GM12878 (cell line): ENCODE measurements at regions of chr11 and their contacts with region 1.

Region 1: DNA sequence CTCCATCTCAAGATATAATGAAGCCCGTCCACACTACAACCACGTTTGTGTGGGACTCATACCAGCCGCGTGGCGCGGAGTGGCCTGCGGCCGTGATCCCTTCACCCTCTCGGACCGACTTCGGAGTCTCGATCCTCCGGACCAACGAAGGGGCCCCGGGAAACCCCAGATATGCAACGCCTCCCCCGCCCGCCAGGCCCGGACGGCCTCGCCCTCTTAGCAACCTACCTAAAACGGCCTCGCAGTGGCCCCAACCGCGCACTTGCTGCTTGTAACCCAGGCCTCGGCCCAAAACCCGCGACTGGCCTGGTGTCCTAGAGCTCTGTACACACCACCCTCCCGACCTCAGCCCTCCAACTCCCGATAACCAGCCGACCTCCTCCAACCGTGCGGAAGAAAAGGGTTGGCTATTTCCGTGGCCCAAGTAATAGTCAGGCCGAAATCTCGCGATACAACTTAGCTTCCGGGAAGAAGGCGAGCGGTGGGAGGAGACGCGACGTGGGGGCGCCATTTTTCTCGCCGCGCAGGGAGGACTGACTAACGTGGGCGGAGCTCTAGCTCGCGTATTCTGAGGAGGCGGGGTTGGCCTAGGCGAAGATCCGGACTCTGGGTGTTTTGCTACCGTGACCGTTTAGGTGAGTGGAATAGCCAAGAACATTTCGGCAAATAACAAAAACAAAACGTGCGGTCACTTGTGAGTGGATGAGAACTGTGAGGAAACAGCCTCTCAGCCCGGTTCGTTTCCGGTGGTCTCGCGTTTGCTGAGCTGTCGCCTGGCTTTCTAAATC is at the starts of genes C11orf54 and TAF1D:
- DNase-seq: peak; percentile 93
- ATAC-seq: peak; percentile 85
- H3K4me3 ChIP-seq: peak within 1 kb of the TSS; percentile 76
- H3K27ac ChIP-seq: peak within 1 kb of the TSS; percentile 91
- H3K4me1 ChIP-seq: no peaks in the 10 kb centered on the region; the same call in none of the 2 replicates
- H3K27me3 ChIP-seq: no peaks in the 10 kb centered on the region
- CTCF ChIP-seq: no peak
- EP300 ChIP-seq: no peak
- POLR2A ChIP-seq: peak; percentile 99
- RAD21 ChIP-seq: no peak
- polyA plus RNA-seq, gene C11orf54: 31.3 to 31.5 TPM
- polyA plus RNA-seq, gene TAF1D: 112 to 181 TPM

Region 2: GRCh38 chr11:93543292-93543977 is 197.9 kb before region 1 on chr11 and contains the start of gene SMCO4:
- CTCF ChIA-PET with region 1: no interaction called
- POLR2A ChIA-PET with region 1: interaction called, 3 read pairs
- RAD21 ChIA-PET with region 1: no interaction called
- SMC1A ChIA-PET with region 1: interaction called, 3 read pairs
- in situ Hi-C with region 1: no loop called
- intact Hi-C with region 1: loop called (anchors 5 kb)
- DNase-seq: no peak
- ATAC-seq: peak; percentile 78
- H3K4me3 ChIP-seq: peak within 1 kb of the TSS; percentile 91
- H3K27ac ChIP-seq: peak within 1 kb of the TSS; percentile 45
- H3K4me1 ChIP-seq: peaks cover 12% of the 10 kb centered on the region
- H3K27me3 ChIP-seq: no peaks in the 10 kb centered on the region
- CTCF ChIP-seq: peak; percentile 52 to 90 (median 73)
- EP300 ChIP-seq: no peak
- POLR2A ChIP-seq: peak; percentile 58
- RAD21 ChIP-seq: peak; percentile 82
- polyA plus RNA-seq, gene SMCO4: 3.6 to 8.1 TPM

Region 3: DNA sequence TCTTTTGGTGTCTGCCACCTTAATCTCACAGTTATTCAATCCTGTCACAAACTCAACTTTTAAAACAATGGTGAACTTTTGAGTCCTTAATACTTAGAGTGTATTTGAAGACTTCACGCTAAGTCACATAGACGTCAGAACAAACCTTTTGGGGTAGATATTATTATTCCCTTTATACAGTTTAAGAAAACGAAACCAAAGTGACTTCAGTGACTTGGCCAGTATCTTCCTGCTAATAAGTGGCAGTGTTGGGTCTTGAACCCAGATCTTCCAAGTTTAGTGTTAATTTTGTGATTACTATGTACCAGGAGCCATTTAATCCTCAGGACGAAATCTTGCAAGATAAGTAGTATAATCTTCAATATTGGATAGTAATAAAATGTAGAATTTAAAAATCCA is 79.1 kb before region 1 on chr11:
- CTCF ChIA-PET with region 1: interaction called, 5 read pairs
- POLR2A ChIA-PET with region 1: interaction called, 13 read pairs
- RAD21 ChIA-PET with region 1: interaction called, 12 read pairs
- SMC1A ChIA-PET with region 1: interaction called, 6 read pairs
- in situ Hi-C with region 1: no loop called
- intact Hi-C with region 1: no loop called
- DNase-seq: no peak
- ATAC-seq: peak; percentile 13
- H3K4me3 ChIP-seq: peak overlapping the region; percentile 80
- H3K27ac ChIP-seq: peak overlapping the region; percentile 83
- H3K4me1 ChIP-seq: peaks cover 4% of the 10 kb centered on the region; the same call in 1 of the 2 replicates
- H3K27me3 ChIP-seq: no peaks in the 10 kb centered on the region
- CTCF ChIP-seq: no peak
- EP300 ChIP-seq: no peak
- POLR2A ChIP-seq: no peak
- RAD21 ChIP-seq: no peak

Region 4: DNA sequence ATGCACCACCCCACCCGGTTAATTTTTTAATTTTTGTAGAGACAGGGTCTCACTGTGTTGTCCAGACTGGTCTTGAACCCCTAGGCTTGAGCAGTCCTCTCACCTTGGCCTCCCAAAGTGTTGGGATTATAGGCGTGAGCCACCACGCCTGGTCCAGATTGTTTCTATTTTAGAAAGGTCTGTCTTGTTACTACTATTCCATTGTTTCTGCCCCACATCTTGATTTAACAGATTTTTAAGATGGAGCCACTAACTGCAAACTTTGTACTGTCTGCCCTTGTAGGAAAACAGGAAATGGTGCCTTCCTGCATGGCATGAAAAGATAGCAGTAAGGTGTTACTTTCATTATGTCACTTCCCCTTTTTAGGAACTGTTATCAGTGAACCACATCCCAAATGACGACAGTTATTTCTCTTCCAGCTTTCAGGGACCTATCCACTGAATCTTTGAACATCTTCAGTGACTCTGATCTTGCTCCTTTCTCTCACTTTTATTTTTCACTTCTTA is 23.2 kb before region 1 on chr11:
- CTCF ChIA-PET with region 1: interaction called, 4 read pairs
- POLR2A ChIA-PET with region 1: interaction called, 5 read pairs
- RAD21 ChIA-PET with region 1: interaction called, 10 read pairs
- SMC1A ChIA-PET with region 1: interaction called, 24 read pairs
- in situ Hi-C with region 1: no loop called
- intact Hi-C with region 1: no loop called
- DNase-seq: peak; percentile 64
- ATAC-seq: peak; percentile 93
- H3K4me3 ChIP-seq: no peak overlapping the region
- H3K27ac ChIP-seq: peak overlapping the region; percentile 82
- H3K4me1 ChIP-seq: peaks cover 12% of the 10 kb centered on the region
- H3K27me3 ChIP-seq: no peaks in the 10 kb centered on the region
- CTCF ChIP-seq: no peak
- EP300 ChIP-seq: peak; percentile 72 to 96; a peak in 3 of 4 replicates
- POLR2A ChIP-seq: no peak
- RAD21 ChIP-seq: no peak

Region 5: DNA sequence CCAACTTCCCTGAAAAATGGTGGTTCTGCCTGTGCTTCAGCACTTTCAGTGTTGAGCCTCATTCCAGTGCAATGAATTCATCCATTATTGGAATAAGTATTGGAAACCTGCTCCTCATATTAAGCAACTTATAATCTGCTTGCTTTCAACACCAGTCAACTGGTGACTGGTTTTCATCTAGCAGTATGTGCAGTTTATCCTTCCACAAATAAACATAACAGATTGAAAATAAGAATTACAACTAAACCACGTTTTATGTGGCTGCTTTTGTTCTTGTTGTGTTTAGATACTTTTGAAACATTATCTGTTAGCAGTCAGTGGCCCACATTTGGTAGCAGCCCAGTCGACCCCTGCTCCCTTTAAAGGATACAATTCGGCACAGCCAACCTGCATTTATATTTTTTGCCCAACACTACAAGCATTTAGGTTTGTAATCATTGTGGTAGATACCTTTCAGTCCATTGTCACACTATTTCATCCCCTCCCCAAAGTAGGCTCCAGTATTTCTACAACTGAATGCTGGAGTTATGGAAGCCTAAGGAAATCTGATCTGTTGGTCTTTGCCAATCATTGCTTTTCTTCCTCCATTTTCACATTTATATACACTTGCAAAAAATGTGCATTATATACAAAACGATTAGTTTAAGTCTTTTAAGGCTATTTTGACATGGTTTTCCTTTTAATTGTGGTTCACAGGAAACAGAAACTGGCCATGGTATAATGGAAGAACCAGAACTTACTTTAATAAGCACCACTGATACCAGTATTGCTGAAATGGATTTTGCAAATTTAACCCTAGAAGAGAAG is 13.1 kb before region 1 on chr11:
- CTCF ChIA-PET with region 1: interaction called, 5 read pairs
- POLR2A ChIA-PET with region 1: interaction called, 8 read pairs
- RAD21 ChIA-PET with region 1: interaction called, 14 read pairs
- SMC1A ChIA-PET with region 1: interaction called, 31 read pairs
- in situ Hi-C with region 1: no loop called
- intact Hi-C with region 1: no loop called
- DNase-seq: no peak
- ATAC-seq: peak; percentile 7
- H3K4me3 ChIP-seq: no peak overlapping the region
- H3K27ac ChIP-seq: no peak overlapping the region
- H3K4me1 ChIP-seq: no peaks in the 10 kb centered on the region
- H3K27me3 ChIP-seq: no peaks in the 10 kb centered on the region
- CTCF ChIP-seq: no peak
- EP300 ChIP-seq: no peak
- POLR2A ChIP-seq: 0 out of 2 replicates have a peak, but pooled peaks have one; percentile 39
- RAD21 ChIP-seq: no peak

Region 6: DNA sequence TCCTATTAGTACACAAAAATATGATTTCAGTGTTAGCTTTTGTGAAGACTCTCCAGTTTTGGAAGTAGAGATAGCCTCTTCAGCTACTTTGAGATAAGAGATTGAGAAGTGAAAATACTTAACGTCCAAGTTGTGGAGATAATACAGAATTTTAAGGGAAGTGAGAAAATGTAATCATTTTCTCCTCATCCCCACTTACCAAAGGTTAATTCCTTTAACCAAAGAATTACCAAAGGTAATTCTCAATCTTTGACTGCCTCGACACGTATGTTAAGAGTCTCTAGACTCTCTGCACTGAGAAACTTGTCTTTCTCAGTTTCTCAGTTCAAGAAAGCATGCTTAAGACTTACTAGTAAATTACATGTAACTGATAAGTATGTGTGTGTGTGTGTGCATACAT is 15.5 kb after region 1 on chr11:
- CTCF ChIA-PET with region 1: interaction called, 4 read pairs
- POLR2A ChIA-PET with region 1: interaction called, 27 read pairs
- RAD21 ChIA-PET with region 1: interaction called, 8 read pairs
- SMC1A ChIA-PET with region 1: interaction called, 4 read pairs
- in situ Hi-C with region 1: no loop called
- intact Hi-C with region 1: no loop called
- DNase-seq: no peak
- ATAC-seq: peak; percentile 87
- H3K4me3 ChIP-seq: no peak overlapping the region
- H3K27ac ChIP-seq: no peak overlapping the region
- H3K4me1 ChIP-seq: peaks cover 3% of the 10 kb centered on the region; the same call in 1 of the 2 replicates
- H3K27me3 ChIP-seq: no peaks in the 10 kb centered on the region
- CTCF ChIP-seq: no peak
- EP300 ChIP-seq: no peak
- POLR2A ChIP-seq: no peak
- RAD21 ChIP-seq: no peak

Region 7: GRCh38 chr11:93784152-93784934 is 43.1 kb after region 1 on chr11 and contains the start of gene MED17:
- CTCF ChIA-PET with region 1: interaction called, 36 read pairs
- POLR2A ChIA-PET with region 1: interaction called, 85 read pairs
- RAD21 ChIA-PET with region 1: interaction called, 40 read pairs
- SMC1A ChIA-PET with region 1: interaction called, 74 read pairs
- in situ Hi-C with region 1: no loop called
- intact Hi-C with region 1: loop called (anchors 1 kb)
- DNase-seq: peak; percentile 64
- ATAC-seq: peak; percentile 95
- H3K4me3 ChIP-seq: peak within 1 kb of the TSS; percentile 80
- H3K27ac ChIP-seq: peak within 1 kb of the TSS; percentile 95
- H3K4me1 ChIP-seq: no peaks in the 10 kb centered on the region; the same call in 1 of the 2 replicates
- H3K27me3 ChIP-seq: no peaks in the 10 kb centered on the region
- CTCF ChIP-seq: peak; percentile 39 to 51 (median 44); a peak in 5 of 6 replicates
- EP300 ChIP-seq: no peak
- POLR2A ChIP-seq: peak; percentile 86
- RAD21 ChIP-seq: no peak; the same call in 1 of the 2 replicates
- polyA plus RNA-seq, gene MED17: 7.3 to 12.4 TPM

Region 8: GRCh38 chr11:94100253-94100652 is 359.0 kb after region 1 on chr11:
- CTCF ChIA-PET with region 1: no interaction called
- POLR2A ChIA-PET with region 1: no interaction called
- RAD21 ChIA-PET with region 1: no interaction called
- SMC1A ChIA-PET with region 1: no interaction called
- in situ Hi-C with region 1: no loop called
- intact Hi-C with region 1: no loop called
- DNase-seq: no peak
- ATAC-seq: no peak
- H3K4me3 ChIP-seq: no peak overlapping the region
- H3K27ac ChIP-seq: no peak overlapping the region
- H3K4me1 ChIP-seq: no peaks in the 10 kb centered on the region
- H3K27me3 ChIP-seq: no peaks in the 10 kb centered on the region
- CTCF ChIP-seq: no peak
- EP300 ChIP-seq: no peak
- POLR2A ChIP-seq: no peak
- RAD21 ChIP-seq: no peak